ENCODE measurements at regions of chr16 and their contacts with region 1.

Region 1: DNA sequence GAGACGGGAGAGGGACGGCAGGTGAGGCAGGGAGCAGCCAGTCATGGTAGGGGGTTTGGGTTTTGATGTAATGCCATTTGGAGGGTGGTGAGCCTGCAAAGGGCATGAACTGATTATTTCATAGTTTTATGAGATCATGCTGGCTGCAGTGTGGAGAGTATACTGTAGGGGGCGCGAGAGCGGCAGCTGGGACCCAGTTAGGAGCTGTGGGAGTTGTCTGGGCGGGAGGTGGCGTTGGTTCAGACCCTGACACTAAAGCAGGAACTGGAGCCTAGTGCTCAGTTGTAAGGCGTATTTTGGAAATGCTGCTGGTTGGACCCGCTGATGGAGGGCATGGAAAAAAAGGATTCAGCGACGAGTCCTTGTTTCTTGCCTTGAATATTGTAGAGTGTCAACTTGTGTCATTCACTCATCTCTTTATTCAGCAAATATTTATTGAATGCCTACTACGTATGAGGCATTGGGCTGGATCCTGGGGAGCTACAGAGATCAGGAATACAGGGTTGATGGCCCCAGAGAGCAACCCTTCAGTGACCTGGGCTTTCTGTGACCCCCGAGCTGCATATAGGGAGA is 23.7 kb upstream of the KDM8 start:
- DNase-seq: peak; percentile 53 to 93 (median 84)
- ATAC-seq: peak; percentile 99
- H3K4me3 ChIP-seq: no peak overlapping the region
- H3K27ac ChIP-seq: no peak overlapping the region
- H3K4me1 ChIP-seq: peaks cover 0 to 13% of the 10 kb centered on the region in 2 donors
- H3K27me3 ChIP-seq: no peaks in the 10 kb centered on the region
- CTCF ChIP-seq: peak; percentile 86 to 92

Region 2: GRCh38 chr16:27245276-27246172 is 65.9 kb after region 1 on chr16:
- intact Hi-C with region 1: no loop called
- DNase-seq: peak in 3 of 4 donors; percentile 72 to 95 (median 89)
- ATAC-seq: peak; percentile 77
- H3K4me3 ChIP-seq: no peak overlapping the region
- H3K27ac ChIP-seq: peak overlapping the region; percentile 41 to 81
- H3K4me1 ChIP-seq: peaks cover 22 to 74% of the 10 kb centered on the region in 2 donors
- H3K27me3 ChIP-seq: no peaks in the 10 kb centered on the region
- CTCF ChIP-seq: no peak

Region 3: GRCh38 chr16:27367461-27368357 is 188.1 kb after region 1 on chr16:
- intact Hi-C with region 1: loop called in 1 of 2 experiments (anchors 5 kb)
- DNase-seq: peak; percentile 37 to 93 (median 74)
- ATAC-seq: peak; percentile 84
- H3K4me3 ChIP-seq: peak overlapping the region in 1 of 2 donors; percentile 15
- H3K27ac ChIP-seq: peak overlapping the region in 1 of 2 donors; percentile 78
- H3K4me1 ChIP-seq: peaks cover 9 to 44% of the 10 kb centered on the region in 2 donors
- H3K27me3 ChIP-seq: no peaks in the 10 kb centered on the region
- CTCF ChIP-seq: peak; percentile 81 to 87

Region 4: DNA sequence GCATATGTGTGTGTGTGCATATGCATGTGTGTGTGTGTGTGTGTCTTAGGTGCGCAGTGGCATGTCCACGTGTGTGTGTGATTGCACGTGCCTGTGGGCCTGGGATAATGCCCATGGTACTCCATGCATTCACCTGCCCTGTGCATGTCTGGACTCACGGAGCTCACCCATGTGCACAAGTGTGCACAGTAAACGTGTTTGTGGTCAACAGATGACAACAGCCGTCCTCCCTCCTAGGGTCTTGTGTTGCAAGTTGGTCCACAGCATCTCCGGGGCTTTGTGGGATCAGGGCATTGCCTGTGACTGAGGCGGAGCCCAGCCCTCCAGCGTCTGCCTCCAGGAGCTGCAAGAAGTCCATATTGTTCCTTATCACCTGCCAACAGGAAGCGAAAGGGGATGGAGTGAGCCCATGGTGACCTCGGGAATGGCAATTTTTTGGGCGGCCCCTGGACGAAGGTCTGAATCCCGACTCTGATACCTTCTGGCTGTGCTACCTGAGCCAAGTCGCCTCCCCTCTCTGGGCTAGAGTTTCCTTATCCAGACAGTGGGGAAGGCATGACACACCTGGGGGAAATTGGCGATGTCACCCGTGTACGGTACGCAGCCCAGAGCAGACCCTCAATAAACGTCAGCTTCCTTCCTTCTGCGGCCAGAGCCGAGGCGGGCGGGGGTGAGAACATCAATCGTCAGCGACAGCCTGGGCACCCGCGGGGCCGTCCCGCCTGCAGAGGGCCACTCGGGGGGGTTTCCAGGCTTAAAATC is 270.0 kb after region 1 on chr16:
- intact Hi-C with region 1: loop called in 1 of 2 experiments (anchors 10 kb)
- DNase-seq: peak in 1 of 4 donors; percentile 21
- ATAC-seq: no peak
- H3K4me3 ChIP-seq: no peak overlapping the region
- H3K27ac ChIP-seq: no peak overlapping the region
- H3K4me1 ChIP-seq: peaks cover 4 to 12% of the 10 kb centered on the region in 2 donors
- H3K27me3 ChIP-seq: peaks cover 0 to 34% of the 10 kb centered on the region in 2 donors
- CTCF ChIP-seq: no peak